Right ventricle myocardium inferior (tissue), 1 donor: ENCODE measurements at regions of chr4 and their contacts with region 1.

Region 1: DNA sequence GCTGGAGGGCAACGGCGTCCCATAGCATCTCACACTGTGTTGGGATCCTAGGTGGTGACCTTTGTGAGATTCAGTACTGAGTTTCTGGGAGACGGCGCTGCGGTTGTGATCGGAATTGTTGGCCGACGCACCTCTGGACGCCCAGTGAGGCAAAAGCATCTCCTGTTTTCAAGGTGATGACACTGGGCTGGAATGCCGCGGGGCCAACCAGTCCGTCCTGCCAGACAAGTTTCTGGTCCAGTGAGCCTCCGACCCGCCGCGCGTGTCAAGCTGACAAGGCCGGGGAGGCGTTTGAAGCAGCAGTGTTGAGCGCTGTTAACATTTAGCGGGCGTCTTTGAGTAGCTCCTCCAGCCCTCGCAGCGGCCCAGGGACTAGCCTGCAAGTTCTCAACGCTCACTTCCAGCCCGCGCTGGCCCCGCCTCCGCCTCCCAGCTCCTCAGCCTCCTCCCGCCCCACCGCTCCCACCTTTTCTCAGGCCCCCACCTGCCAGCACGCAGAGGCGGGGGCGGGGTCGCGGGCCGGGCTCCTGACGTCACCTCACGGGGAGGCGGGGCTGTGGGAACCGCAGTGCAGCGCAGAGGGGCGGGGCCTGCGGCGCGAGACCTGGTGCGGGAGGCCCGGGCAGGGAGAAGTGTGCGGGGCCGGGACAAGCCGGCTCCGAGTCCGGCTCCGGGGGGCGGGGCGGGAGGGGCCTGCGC is 476 bp upstream of the CDS1 start:
- DNase-seq: peak; percentile 90
- ATAC-seq: peak; percentile 95

Region 2: DNA sequence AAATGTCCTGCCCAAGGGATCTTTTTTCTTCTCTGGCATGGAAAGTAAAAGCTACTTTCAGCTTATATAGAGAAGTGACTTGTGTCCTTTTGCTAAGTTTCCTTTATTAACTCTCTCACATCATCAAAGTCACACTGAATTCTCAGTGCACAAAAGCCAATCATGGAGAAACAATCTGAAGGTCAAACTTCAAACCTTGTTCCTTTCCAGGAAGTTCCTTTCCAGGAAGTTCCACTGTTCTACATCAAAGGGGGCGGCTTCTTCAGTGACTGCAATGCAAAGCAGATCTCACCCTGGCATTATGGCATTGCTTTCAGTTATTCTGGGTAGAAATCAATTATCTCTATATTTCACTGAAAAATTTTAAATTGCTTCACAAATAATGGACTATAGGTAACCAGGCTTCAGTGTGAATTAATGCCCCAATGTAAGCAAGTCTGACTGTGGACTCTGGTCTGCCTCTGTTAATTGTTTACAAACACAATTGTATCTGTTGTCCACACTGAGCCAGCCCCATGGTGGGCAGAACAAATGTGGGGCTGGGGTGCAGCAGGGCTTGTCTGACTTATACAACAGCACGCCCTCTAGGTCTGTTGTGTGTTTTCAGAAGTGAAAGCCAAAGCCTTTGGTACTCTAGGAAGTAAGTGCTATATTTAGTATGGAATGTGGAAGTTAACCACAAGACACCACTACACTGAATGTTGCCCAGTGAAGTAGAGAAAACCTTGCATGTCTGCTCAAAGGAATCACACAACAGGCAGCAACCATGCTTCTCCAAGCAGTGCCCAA is 99.2 kb after region 1 on chr4:
- intact Hi-C with region 1: loop called (anchors 5 kb)
- DNase-seq: no peak
- ATAC-seq: peak; percentile 74

Region 3: DNA sequence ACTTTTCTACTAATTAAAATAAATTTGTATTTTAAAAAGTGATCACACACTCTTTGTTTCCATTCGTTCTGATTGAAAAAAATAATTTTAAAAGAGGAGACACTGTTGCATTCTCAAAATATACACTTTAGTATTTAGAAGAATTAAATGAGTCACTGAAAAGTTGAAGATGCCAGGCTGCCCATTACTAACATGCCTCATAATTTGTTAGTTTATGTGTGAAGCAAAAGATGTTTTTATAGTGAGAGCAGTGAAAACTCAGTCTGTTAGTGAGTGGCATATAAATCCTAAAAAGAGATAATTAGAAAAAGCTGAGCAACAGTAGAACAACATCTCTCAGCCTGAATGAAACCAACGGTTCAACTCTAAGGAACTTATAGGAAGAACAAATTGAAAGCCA is 143.9 kb after region 1 on chr4:
- intact Hi-C with region 1: loop called (anchors 10 kb)
- DNase-seq: no peak
- ATAC-seq: no peak